ENCODE measurements at regions of chr3 and their contacts with region 1.

Region 1: GRCh38 chr3:69092030-69092516 is 7.3 kb downstream of the ARL6IP5 start:
- DNase-seq: no peak
- ATAC-seq: peak; percentile 70
- H3K4me3 ChIP-seq: peak overlapping the region; percentile 59
- H3K27ac ChIP-seq: peak overlapping the region; percentile 39
- H3K4me1 ChIP-seq: peaks cover 54% of the 10 kb centered on the region
- H3K27me3 ChIP-seq: no peaks in the 10 kb centered on the region
- CTCF ChIP-seq: no peak
- EP300 ChIP-seq: no peak
- POLR2A ChIP-seq: no peak
- RAD21 ChIP-seq: no peak

Region 2: DNA sequence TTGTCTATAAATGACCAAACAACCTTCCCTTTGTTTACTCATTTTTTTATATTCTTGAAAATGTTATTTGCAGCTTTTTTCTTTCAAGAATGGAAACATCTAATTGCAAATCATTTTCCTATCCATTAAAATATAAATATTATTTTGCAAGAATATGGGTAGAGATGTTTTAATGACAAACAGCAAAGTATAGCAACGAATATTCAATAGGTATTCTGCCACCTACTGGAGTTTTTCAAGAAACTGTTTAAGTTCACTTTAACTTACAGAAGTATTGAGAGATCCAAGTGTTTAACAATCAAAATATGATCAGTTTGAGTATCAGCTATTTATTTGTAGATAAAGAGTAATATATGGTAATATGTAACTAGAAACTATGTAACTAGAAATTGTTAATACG is 71.6 kb before region 1 on chr3:
- CTCF ChIA-PET with region 1: interaction called, 4 read pairs
- POLR2A ChIA-PET with region 1: no interaction called
- RAD21 ChIA-PET with region 1: no interaction called
- SMC1A ChIA-PET with region 1: interaction called, 10 read pairs
- in situ Hi-C with region 1: no loop called
- intact Hi-C with region 1: no loop called
- DNase-seq: no peak
- ATAC-seq: peak; percentile 80
- H3K4me3 ChIP-seq: no peak overlapping the region
- H3K27ac ChIP-seq: no peak overlapping the region
- H3K4me1 ChIP-seq: no peaks in the 10 kb centered on the region
- H3K27me3 ChIP-seq: no peaks in the 10 kb centered on the region
- CTCF ChIP-seq: peak in 1 of 3 experiments; percentile 19; a peak in 2 of 6 replicates
- EP300 ChIP-seq: no peak
- POLR2A ChIP-seq: no peak
- RAD21 ChIP-seq: no peak

Region 3: DNA sequence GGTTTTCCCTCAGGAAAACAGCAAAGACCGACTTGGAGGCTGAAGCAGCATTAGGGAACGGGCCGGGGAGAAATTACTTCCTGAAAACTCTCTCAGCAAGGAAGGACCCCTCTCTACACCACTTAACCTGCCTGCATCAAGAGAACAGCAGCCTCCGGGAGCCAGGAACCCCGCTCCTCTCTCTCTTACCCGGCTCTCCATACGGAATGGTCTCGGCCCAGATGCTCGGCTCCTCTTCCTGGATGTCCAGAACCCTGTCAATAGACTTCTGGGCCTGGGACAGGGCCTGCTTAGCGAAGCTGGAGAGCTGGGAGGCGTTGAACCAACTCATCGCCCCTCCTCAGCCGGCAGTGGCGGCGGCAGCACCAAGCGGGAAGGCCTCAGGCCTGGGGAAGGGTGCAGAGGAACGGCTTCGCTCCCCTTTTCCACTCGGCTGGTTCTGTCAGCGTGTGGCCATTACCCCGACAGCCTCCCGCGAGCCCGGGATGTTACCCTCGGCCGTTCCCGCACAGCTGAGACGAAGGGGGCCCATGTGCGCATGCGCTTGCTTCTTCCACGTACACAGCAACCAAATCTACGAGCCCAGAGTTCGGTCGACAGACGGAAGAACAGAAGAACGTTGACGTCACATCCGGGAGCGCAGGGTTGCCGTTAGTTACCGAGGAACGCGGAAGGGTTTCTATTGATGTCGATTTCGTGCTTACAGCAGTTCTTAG is 40.2 kb before region 1 on chr3 and contains the start of gene TMF1:
- CTCF ChIA-PET with region 1: interaction called, 13 read pairs
- POLR2A ChIA-PET with region 1: interaction called, 30 read pairs
- RAD21 ChIA-PET with region 1: interaction called, 152 read pairs
- SMC1A ChIA-PET with region 1: interaction called, 234 read pairs
- in situ Hi-C with region 1: no loop called
- intact Hi-C with region 1: no loop called
- DNase-seq: peak; percentile 97
- ATAC-seq: peak; percentile 92
- H3K4me3 ChIP-seq: peak within 1 kb of the TSS; percentile 98
- H3K27ac ChIP-seq: peak within 1 kb of the TSS; percentile 73
- H3K4me1 ChIP-seq: peaks cover 3% of the 10 kb centered on the region; the same call in 1 of the 2 replicates
- H3K27me3 ChIP-seq: no peaks in the 10 kb centered on the region
- CTCF ChIP-seq: no peak
- EP300 ChIP-seq: no peak
- POLR2A ChIP-seq: peak; percentile 89
- RAD21 ChIP-seq: no peak
- polyA plus RNA-seq, gene TMF1: 7.1 to 7.9 TPM

Region 4: GRCh38 chr3:69065318-69065964 is 26.6 kb before region 1 on chr3:
- CTCF ChIA-PET with region 1: interaction called, 4 read pairs
- POLR2A ChIA-PET with region 1: interaction called, 3 read pairs
- RAD21 ChIA-PET with region 1: interaction called, 9 read pairs
- SMC1A ChIA-PET with region 1: interaction called, 10 read pairs
- in situ Hi-C with region 1: no loop called
- intact Hi-C with region 1: no loop called
- DNase-seq: no peak
- ATAC-seq: no peak
- H3K4me3 ChIP-seq: no peak overlapping the region
- H3K27ac ChIP-seq: no peak overlapping the region
- H3K4me1 ChIP-seq: no peaks in the 10 kb centered on the region
- H3K27me3 ChIP-seq: no peaks in the 10 kb centered on the region
- CTCF ChIP-seq: no peak
- EP300 ChIP-seq: no peak
- POLR2A ChIP-seq: no peak
- RAD21 ChIP-seq: no peak

Region 5: DNA sequence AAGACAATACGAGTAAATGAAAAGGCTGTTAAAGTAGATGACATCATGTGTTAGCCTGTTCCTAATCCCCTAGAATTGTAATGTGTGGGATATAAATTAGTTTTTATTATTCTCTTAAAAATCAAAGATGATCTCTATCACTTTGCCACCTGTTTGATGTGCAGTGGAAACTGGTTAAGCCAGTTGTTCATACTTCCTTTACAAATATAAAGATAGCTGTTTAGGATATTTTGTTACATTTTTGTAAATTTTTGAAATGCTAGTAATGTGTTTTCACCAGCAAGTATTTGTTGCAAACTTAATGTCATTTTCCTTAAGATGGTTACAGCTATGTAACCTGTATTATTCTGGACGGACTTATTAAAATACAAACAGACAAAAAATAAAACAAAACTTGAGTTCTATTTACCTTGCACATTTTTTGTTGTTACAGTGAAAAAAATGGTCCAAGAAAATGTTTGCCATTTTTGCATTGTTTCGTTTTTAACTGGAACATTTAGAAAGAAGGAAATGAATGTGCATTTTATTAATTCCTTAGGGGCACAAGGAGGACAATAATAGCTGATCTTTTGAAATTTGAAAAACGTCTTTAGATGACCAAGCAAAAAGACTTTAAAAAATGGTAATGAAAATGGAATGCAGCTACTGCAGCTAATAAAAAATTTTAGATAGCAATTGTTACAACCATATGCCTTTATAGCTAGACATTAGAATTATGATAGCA is 13.1 kb after region 1 on chr3:
- CTCF ChIA-PET with region 1: interaction called, 5 read pairs
- POLR2A ChIA-PET with region 1: interaction called, 13 read pairs
- RAD21 ChIA-PET with region 1: interaction called, 4 read pairs
- SMC1A ChIA-PET with region 1: interaction called, 33 read pairs
- in situ Hi-C with region 1: no loop called
- intact Hi-C with region 1: no loop called
- DNase-seq: no peak
- ATAC-seq: no peak
- H3K4me3 ChIP-seq: no peak overlapping the region
- H3K27ac ChIP-seq: no peak overlapping the region
- H3K4me1 ChIP-seq: no peaks in the 10 kb centered on the region
- H3K27me3 ChIP-seq: no peaks in the 10 kb centered on the region
- CTCF ChIP-seq: no peak
- EP300 ChIP-seq: no peak
- POLR2A ChIP-seq: no peak
- RAD21 ChIP-seq: no peak

Region 6: GRCh38 chr3:69212411-69213139 is 120.5 kb after region 1 on chr3:
- CTCF ChIA-PET with region 1: no interaction called
- POLR2A ChIA-PET with region 1: no interaction called
- RAD21 ChIA-PET with region 1: no interaction called
- SMC1A ChIA-PET with region 1: no interaction called
- in situ Hi-C with region 1: no loop called
- intact Hi-C with region 1: no loop called
- DNase-seq: no peak
- ATAC-seq: peak; percentile 92
- H3K4me3 ChIP-seq: no peak overlapping the region
- H3K27ac ChIP-seq: no peak overlapping the region
- H3K4me1 ChIP-seq: no peaks in the 10 kb centered on the region
- H3K27me3 ChIP-seq: no peaks in the 10 kb centered on the region
- CTCF ChIP-seq: no peak
- EP300 ChIP-seq: peak; percentile 24 to 27; a peak in 1 of 4 replicates
- POLR2A ChIP-seq: no peak
- RAD21 ChIP-seq: no peak